ENCODE measurements at regions of chr4 and their contacts with region 1.

Region 1: DNA sequence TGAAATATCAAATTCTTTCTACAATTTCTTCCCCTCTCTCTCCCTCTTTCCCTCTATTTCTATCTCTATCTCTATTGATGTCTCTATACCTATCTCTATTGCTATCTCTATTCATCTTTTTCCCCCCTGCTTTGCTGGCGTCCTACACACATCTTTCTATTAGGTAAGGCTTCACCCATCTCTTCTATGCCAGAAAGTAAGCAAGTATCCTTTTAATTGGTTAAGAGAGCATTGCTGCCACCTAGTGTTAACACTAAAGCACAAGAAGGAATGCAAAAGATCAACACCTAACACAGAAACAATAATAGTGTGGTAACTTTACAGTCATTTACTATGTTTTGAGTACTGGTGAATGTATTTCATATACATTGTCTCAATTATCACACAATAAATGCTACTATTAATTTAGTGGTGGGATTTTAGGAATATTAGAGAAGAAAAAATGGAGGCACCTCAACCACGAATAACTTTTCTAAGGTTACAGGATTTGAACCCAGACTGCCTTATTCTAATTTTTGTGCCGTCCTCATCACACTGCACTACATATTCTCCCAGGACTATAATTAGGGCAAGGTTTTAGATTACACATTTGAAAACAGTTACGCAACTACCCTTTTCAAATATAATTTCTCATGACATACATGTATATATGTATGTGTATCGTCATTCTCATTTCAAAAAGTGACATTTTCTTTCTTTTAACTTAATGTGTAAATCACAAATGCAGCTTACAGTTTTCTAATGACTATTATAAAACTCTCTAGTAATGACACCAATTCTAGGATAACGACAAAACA is 3.7 kb upstream of the C4orf36 start:
- DNase-seq: peak; percentile 22 to 68
- ATAC-seq: peak; percentile 16 to 37; a peak in 2 of 6 replicates
- H3K4me3 ChIP-seq: no peak overlapping the region
- H3K27ac ChIP-seq: no peak overlapping the region
- H3K4me1 ChIP-seq: peaks cover 5% of the 10 kb centered on the region; the same call in 2 of the 3 replicates
- CTCF ChIP-seq: peak; percentile 77
- EP300 ChIP-seq: no peak
- POLR2A ChIP-seq: no peak
- RAD21 ChIP-seq: peak; percentile 85

Region 2: DNA sequence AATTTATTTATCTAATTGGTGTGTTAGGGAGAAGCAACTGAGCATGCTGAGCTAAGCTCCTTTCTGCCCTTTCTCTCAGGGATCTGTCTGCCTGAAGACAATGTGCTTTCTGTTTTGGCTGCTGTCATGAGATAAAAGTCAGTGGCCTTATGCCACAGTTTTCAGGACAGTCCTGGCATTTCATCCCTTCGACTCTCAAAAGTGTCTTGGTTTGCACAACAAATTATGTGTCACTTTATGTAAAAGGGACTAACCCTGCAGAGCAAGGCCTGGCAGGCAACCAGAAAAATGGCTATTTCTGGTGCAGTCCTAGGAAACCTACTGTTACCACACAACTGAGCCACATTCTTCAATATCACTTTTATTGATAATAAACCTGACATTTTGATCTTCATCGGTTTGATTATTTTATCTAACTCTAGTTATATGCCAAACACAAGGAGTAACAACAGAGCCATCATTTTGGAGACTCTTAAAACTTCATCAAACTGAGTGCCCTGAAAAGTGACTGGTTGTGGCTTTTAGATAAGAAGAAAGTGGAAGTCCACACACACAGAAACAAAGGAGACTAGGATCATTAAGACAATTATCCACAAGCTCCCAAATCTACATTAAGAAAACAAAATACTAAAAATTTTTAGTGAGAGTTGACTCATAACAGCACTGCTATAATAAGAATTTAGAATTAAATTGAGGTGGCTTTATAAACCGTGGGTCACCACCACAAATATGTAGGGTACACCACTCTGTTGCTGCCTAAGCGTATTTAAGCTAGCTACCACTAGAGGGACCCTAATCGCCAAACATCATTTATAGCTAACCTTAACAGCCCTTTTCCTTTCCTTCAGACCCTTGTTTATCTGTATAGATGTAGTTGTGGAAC is 397.7 kb before region 1 on chr4:
- CTCF ChIA-PET with region 1: interaction called, 51 read pairs
- POLR2A ChIA-PET with region 1: interaction called, 3 read pairs
- DNase-seq: peak; percentile 16 to 39
- ATAC-seq: peak; percentile 85 to 95
- H3K4me3 ChIP-seq: no peak overlapping the region
- H3K27ac ChIP-seq: peak overlapping the region in 1 of 2 experiments; percentile 75; a peak in 3 of 6 replicates
- H3K4me1 ChIP-seq: peaks cover 23% of the 10 kb centered on the region
- CTCF ChIP-seq: peak; percentile 65
- EP300 ChIP-seq: no peak
- POLR2A ChIP-seq: no peak
- RAD21 ChIP-seq: peak; percentile 73 to 77

Region 3: GRCh38 chr4:86522349-86522748 is 373.5 kb before region 1 on chr4:
- CTCF ChIA-PET with region 1: interaction called, 12 read pairs
- POLR2A ChIA-PET with region 1: no interaction called
- DNase-seq: no peak
- ATAC-seq: no peak
- H3K4me3 ChIP-seq: no peak overlapping the region
- H3K27ac ChIP-seq: no peak overlapping the region
- H3K4me1 ChIP-seq: no peaks in the 10 kb centered on the region
- CTCF ChIP-seq: no peak
- EP300 ChIP-seq: no peak
- POLR2A ChIP-seq: no peak
- RAD21 ChIP-seq: peak; percentile 25 to 40; a peak in 3 of 5 replicates